A549 (cell line): ENCODE measurements at regions of chr17 and their contacts with region 1.

Region 1: DNA sequence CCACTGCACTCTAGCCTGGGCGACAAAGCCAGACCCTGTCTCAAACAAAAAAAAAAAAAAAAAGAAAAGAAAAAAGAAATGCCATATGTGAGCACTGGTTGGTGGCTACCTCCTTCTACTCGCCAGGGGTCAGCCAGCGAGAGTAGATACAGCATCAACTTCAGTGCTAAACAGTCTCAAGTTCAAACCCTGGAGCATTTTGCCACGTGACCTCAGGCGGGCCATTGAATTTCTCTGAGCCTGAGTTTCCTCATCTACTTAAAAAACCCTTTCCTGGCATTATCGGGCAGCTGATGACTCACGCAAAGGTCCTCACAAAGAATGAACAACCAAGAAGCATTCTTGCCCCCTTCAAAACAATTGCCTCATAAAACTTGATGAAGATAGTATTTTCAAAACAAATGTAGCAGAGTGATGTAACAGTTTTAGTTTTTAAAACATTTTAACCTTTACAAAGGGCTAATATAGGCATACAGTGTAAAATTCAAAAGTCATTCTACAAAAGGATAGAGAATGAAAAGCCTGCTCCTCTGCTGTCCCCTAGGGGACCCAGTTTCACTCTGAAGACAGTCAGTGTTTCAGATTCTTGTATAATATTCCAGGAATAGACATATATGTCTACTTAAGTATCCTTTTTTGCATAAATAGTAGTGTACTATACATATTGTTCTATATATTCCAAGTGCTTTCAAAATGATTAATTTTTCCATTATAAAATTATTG is 28.4 kb downstream of the DNAH2 start:
- DNase-seq: peak; percentile 70 to 75
- ATAC-seq: peak; percentile 55 to 65; a peak in 5 of 6 replicates
- H3K4me3 ChIP-seq: no peak overlapping the region
- H3K27ac ChIP-seq: peak overlapping the region in 1 of 2 experiments; percentile 24; a peak in 3 of 6 replicates
- H3K4me1 ChIP-seq: peaks cover 12% of the 10 kb centered on the region
- CTCF ChIP-seq: peak; percentile 13; the same call in 1 of the 3 replicates
- EP300 ChIP-seq: no peak
- POLR2A ChIP-seq: no peak
- RAD21 ChIP-seq: no peak

Region 2: DNA sequence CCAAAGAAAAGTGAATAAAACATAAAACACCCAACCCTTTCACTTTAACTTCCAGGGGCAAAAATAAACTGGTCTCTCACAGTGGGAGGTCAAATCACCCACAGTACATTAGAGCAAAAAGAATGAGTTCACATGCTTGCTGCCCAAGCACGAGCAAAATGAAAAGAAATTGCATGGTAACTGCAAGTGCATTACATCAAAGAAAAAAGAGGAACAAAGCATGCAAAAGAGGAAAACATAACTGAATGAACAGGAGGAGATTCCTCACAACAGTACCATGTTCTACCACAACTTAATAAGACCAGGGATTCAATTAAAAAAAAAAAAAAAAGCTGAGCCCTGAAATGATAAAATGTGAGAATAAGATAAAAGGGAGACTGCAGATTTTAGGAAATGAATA is 16.1 kb before region 1 on chr17:
- CTCF ChIA-PET with region 1: interaction called, 35 read pairs
- POLR2A ChIA-PET with region 1: no interaction called
- DNase-seq: no peak
- ATAC-seq: no peak
- H3K4me3 ChIP-seq: no peak overlapping the region
- H3K27ac ChIP-seq: no peak overlapping the region
- H3K4me1 ChIP-seq: no peaks in the 10 kb centered on the region
- CTCF ChIP-seq: no peak
- EP300 ChIP-seq: no peak
- POLR2A ChIP-seq: no peak
- RAD21 ChIP-seq: no peak

Region 3: GRCh38 chr17:7798839-7799238 is 52.9 kb after region 1 on chr17:
- CTCF ChIA-PET with region 1: interaction called, 11 read pairs
- POLR2A ChIA-PET with region 1: no interaction called
- DNase-seq: no peak
- ATAC-seq: 0 out of 6 replicates have a peak, but pooled peaks of 1 of the 2 experiments have one; percentile 20
- H3K4me3 ChIP-seq: no peak overlapping the region
- H3K27ac ChIP-seq: no peak overlapping the region
- H3K4me1 ChIP-seq: no peaks in the 10 kb centered on the region
- CTCF ChIP-seq: no peak
- EP300 ChIP-seq: no peak
- POLR2A ChIP-seq: no peak
- RAD21 ChIP-seq: no peak

Region 4: GRCh38 chr17:7834962-7835813 is 89.3 kb after region 1 on chr17:
- CTCF ChIA-PET with region 1: interaction called, 82 read pairs
- POLR2A ChIA-PET with region 1: no interaction called
- DNase-seq: peak; percentile 99
- ATAC-seq: peak; percentile 58 to 73
- H3K4me3 ChIP-seq: peak overlapping the region; percentile 60
- H3K27ac ChIP-seq: peak overlapping the region; percentile 82 to 89
- H3K4me1 ChIP-seq: peaks cover 36% of the 10 kb centered on the region
- CTCF ChIP-seq: peak; percentile 87
- EP300 ChIP-seq: no peak
- POLR2A ChIP-seq: peak; percentile 39
- RAD21 ChIP-seq: peak; percentile 83 to 88

Region 5: GRCh38 chr17:7897773-7898172 is 151.9 kb after region 1 on chr17:
- CTCF ChIA-PET with region 1: interaction called, 14 read pairs
- POLR2A ChIA-PET with region 1: no interaction called
- DNase-seq: peak; percentile 55 to 72
- ATAC-seq: peak; percentile 87 to 92
- H3K4me3 ChIP-seq: no peak overlapping the region
- H3K27ac ChIP-seq: no peak overlapping the region
- H3K4me1 ChIP-seq: no peaks in the 10 kb centered on the region
- CTCF ChIP-seq: peak; percentile 64
- EP300 ChIP-seq: no peak
- POLR2A ChIP-seq: no peak
- RAD21 ChIP-seq: peak; percentile 81 to 88

Region 6: GRCh38 chr17:8041249-8041928 is 295.5 kb after region 1 on chr17:
- CTCF ChIA-PET with region 1: interaction called, 41 read pairs
- POLR2A ChIA-PET with region 1: no interaction called
- DNase-seq: peak; percentile 81
- ATAC-seq: peak; percentile 67 to 76; a peak in 5 of 6 replicates
- H3K4me3 ChIP-seq: no peak overlapping the region
- H3K27ac ChIP-seq: peak overlapping the region in 1 of 2 experiments; percentile 3; a peak in 1 of 6 replicates
- H3K4me1 ChIP-seq: no peaks in the 10 kb centered on the region
- CTCF ChIP-seq: peak; percentile 96
- EP300 ChIP-seq: no peak
- POLR2A ChIP-seq: no peak
- RAD21 ChIP-seq: peak; percentile 94 to 96